Activated CD4-positive, alpha-beta memory T cell treated with anti-CD3 and anti-CD28 coated beads for 36 hours (primary cell): ENCODE measurements at regions of chr6 and their contacts with region 1.

Region 1: GRCh38 chr6:16761471-16762267 is 409 bp upstream of the ATXN1 start:
- DNase-seq: peak; percentile 92
- H3K4me3 Mint-ChIP-seq: peak overlapping the region; percentile 94
- H3K27ac Mint-ChIP-seq: peak overlapping the region; percentile 93
- H3K4me1 Mint-ChIP-seq: peaks cover 58% of the 10 kb centered on the region
- H3K27me3 Mint-ChIP-seq: no peaks in the 10 kb centered on the region

Region 2: DNA sequence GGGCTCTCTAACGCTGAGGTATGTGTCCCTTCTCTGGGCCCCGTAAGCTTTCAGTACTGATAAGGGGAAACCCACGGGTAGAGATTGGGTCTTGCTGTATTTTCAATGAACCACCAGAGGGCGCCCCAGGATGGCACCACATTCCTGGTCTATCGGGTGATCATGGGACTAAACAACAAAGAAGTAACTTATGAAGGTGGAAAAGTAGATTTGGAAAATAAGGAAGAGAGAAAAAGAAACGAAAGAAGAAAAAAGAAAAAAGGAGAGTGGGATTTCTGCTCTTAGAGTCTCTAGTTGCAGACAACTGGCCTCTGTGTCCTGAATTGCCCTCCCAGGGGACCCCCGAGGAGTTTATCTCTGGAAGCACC is 429.5 kb before region 1 on chr6:
- CTCF ChIA-PET with region 1: interaction called, 7 read pairs
- POLR2A ChIA-PET with region 1: no interaction called
- intact Hi-C with region 1: loop called (anchors 1 kb)
- DNase-seq: peak; percentile 91
- H3K4me3 Mint-ChIP-seq: no peak overlapping the region
- H3K27ac Mint-ChIP-seq: no peak overlapping the region
- H3K4me1 Mint-ChIP-seq: peaks cover 9% of the 10 kb centered on the region
- H3K27me3 Mint-ChIP-seq: no peaks in the 10 kb centered on the region

Region 3: DNA sequence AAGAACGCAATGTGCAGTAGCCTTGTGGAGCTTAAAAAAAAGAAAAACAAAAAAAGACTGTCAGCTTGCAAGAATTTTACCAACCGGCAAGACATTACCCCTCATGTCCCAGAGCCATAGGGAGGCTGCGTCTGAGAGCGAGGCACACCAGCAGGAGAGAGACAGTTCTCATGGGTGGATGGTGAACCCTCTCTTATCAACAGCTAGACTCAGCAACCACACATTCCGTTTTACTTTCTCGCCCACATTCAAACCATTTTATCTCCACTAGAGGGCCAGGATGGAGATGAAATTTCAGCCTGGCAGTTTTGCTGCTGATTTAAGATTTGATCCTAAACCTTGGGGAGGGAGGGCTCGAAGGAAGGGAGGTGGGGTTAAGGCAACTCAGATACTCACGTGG is 247.4 kb before region 1 on chr6:
- CTCF ChIA-PET with region 1: interaction called, 62 read pairs
- POLR2A ChIA-PET with region 1: interaction called, 19 read pairs
- intact Hi-C with region 1: loop called (anchors 1 kb)
- DNase-seq: peak; percentile 39
- H3K4me3 Mint-ChIP-seq: no peak overlapping the region
- H3K27ac Mint-ChIP-seq: no peak overlapping the region
- H3K4me1 Mint-ChIP-seq: peaks cover 79% of the 10 kb centered on the region
- H3K27me3 Mint-ChIP-seq: no peaks in the 10 kb centered on the region

Region 4: DNA sequence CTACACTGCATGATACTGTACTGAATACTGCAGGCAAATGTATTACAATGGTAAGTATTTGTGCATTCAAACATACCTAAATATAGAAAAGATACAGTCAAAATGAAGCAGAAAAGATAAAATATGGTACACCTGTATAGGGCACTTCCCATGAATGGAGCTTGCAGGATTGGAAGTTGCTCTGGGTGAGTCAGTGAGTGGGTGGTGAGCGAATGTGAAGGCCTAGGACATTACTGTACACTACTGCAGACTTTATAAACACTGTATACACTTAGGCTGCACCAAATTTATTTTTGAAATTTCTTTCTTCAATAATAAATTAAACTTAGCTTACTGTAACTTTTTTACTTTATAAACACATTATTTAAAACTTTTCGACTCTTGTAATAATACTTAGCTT is 213.5 kb before region 1 on chr6:
- CTCF ChIA-PET with region 1: no interaction called
- POLR2A ChIA-PET with region 1: no interaction called
- intact Hi-C with region 1: no loop called
- DNase-seq: no peak
- H3K4me3 Mint-ChIP-seq: no peak overlapping the region
- H3K27ac Mint-ChIP-seq: no peak overlapping the region
- H3K4me1 Mint-ChIP-seq: peaks cover 16% of the 10 kb centered on the region
- H3K27me3 Mint-ChIP-seq: no peaks in the 10 kb centered on the region

Region 5: GRCh38 chr6:16670183-16670582 is 91.5 kb before region 1 on chr6:
- CTCF ChIA-PET with region 1: interaction called, 5 read pairs
- POLR2A ChIA-PET with region 1: interaction called, 7 read pairs
- intact Hi-C with region 1: loop called (anchors 1 kb)
- DNase-seq: no peak
- H3K4me3 Mint-ChIP-seq: peak overlapping the region; percentile 33
- H3K27ac Mint-ChIP-seq: peak overlapping the region; percentile 87
- H3K4me1 Mint-ChIP-seq: peaks cover 81% of the 10 kb centered on the region
- H3K27me3 Mint-ChIP-seq: no peaks in the 10 kb centered on the region

Region 6: GRCh38 chr6:16712931-16713484 is 48.7 kb before region 1 on chr6:
- CTCF ChIA-PET with region 1: interaction called, 16 read pairs
- POLR2A ChIA-PET with region 1: interaction called, 31 read pairs
- intact Hi-C with region 1: loop called (anchors 1 kb)
- DNase-seq: peak; percentile 62
- H3K4me3 Mint-ChIP-seq: peak overlapping the region; percentile 64
- H3K27ac Mint-ChIP-seq: peak overlapping the region; percentile 92
- H3K4me1 Mint-ChIP-seq: peaks cover 70% of the 10 kb centered on the region
- H3K27me3 Mint-ChIP-seq: no peaks in the 10 kb centered on the region

Region 7: GRCh38 chr6:16964553-16965501 is 203.2 kb after region 1 on chr6:
- CTCF ChIA-PET with region 1: interaction called, 27 read pairs
- POLR2A ChIA-PET with region 1: no interaction called
- intact Hi-C with region 1: loop called (anchors 1 kb)
- DNase-seq: peak; percentile 83
- H3K4me3 Mint-ChIP-seq: no peak overlapping the region
- H3K27ac Mint-ChIP-seq: no peak overlapping the region
- H3K4me1 Mint-ChIP-seq: peaks cover 14% of the 10 kb centered on the region
- H3K27me3 Mint-ChIP-seq: peaks cover 15% of the 10 kb centered on the region

Region 8: GRCh38 chr6:17269840-17270239 is 508.2 kb after region 1 on chr6:
- CTCF ChIA-PET with region 1: no interaction called
- POLR2A ChIA-PET with region 1: no interaction called
- intact Hi-C with region 1: no loop called
- DNase-seq: no peak
- H3K4me3 Mint-ChIP-seq: no peak overlapping the region
- H3K27ac Mint-ChIP-seq: no peak overlapping the region
- H3K4me1 Mint-ChIP-seq: no peaks in the 10 kb centered on the region
- H3K27me3 Mint-ChIP-seq: peaks cover 21% of the 10 kb centered on the region